PC-3 (cell line): ENCODE measurements at regions of chr10 and their contacts with region 1.

Region 1: GRCh38 chr10:36671607-36672006 is 453.8 kb upstream of the ANKRD30A start:
- DNase-seq: peak; percentile 99
- ATAC-seq: peak; percentile 66
- H3K4me3 ChIP-seq: peak overlapping the region; percentile 26; the same call in 1 of the 2 replicates
- H3K27ac ChIP-seq: peak overlapping the region; percentile 70
- H3K4me1 ChIP-seq: peaks cover 46% of the 10 kb centered on the region
- H3K27me3 ChIP-seq: no peaks in the 10 kb centered on the region
- CTCF ChIP-seq: no peak

Region 2: DNA sequence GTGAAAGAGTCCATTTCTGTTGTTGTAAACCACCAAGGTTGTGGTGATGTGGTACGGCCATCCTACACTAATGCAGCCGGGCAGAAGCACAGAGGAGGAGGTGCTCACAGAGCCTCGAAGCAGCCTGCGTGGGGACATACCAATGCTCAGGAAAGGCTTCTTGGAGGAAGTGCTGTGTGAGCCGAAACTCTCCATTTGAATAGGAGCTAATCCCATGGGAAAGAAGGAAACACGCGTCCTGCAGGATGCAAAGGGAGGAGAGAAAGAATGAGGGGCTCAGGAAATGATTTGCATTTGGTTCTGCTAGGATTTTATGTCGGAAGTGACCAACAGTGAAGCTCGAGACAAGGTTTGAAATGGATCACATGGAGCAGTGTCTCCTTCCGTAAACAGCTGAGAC is 24.1 kb before region 1 on chr10:
- CTCF ChIA-PET with region 1: no interaction called
- POLR2A ChIA-PET with region 1: no interaction called
- intact Hi-C with region 1: no loop called
- DNase-seq: no peak
- ATAC-seq: no peak
- H3K4me3 ChIP-seq: no peak overlapping the region
- H3K27ac ChIP-seq: no peak overlapping the region
- H3K4me1 ChIP-seq: no peaks in the 10 kb centered on the region
- H3K27me3 ChIP-seq: no peaks in the 10 kb centered on the region
- CTCF ChIP-seq: no peak

Region 3: GRCh38 chr10:36717118-36717517 is 45.5 kb after region 1 on chr10:
- CTCF ChIA-PET with region 1: no interaction called
- POLR2A ChIA-PET with region 1: no interaction called
- intact Hi-C with region 1: loop called (anchors 1 kb)
- DNase-seq: peak; percentile 82
- ATAC-seq: peak; percentile 69
- H3K4me3 ChIP-seq: no peak overlapping the region
- H3K27ac ChIP-seq: peak overlapping the region; percentile 80
- H3K4me1 ChIP-seq: peaks cover 40% of the 10 kb centered on the region
- H3K27me3 ChIP-seq: no peaks in the 10 kb centered on the region
- CTCF ChIP-seq: no peak